ENCODE measurements at regions of chr7 and their contacts with region 1.

Region 1: DNA sequence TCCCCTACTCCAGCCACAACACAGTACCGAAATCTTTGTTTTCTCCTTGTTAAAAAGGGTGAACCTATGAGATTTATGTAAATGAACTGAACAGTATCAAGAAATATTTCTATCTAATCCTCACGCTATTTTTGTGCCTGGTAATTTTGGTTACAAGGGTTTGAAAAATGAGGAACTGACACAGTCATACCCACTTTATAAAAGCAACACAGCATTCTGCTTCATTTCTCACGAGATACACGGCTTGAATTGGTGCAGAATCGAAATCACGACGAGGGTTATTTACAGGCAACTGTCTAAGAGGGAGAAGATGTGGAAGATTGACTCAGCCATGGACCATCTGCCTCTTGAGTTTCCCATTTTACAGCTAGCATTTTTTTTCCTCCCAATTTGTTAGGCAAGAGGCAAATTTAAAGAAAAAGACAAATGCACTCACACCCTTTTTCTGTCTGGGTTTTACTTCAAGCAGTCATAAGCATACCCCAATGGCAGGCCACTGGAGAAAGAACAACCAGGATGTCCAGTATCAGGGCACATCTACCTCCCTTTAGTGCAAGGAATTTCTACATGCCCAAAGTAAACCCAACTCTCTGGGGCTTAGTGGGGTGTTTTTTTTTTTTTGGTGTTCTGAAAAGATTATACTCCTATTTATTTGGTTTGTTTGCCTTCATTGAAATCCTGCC is 108.1 kb downstream of the ITGB8 start:
- DNase-seq: no peak
- ATAC-seq: no peak

Region 2: DNA sequence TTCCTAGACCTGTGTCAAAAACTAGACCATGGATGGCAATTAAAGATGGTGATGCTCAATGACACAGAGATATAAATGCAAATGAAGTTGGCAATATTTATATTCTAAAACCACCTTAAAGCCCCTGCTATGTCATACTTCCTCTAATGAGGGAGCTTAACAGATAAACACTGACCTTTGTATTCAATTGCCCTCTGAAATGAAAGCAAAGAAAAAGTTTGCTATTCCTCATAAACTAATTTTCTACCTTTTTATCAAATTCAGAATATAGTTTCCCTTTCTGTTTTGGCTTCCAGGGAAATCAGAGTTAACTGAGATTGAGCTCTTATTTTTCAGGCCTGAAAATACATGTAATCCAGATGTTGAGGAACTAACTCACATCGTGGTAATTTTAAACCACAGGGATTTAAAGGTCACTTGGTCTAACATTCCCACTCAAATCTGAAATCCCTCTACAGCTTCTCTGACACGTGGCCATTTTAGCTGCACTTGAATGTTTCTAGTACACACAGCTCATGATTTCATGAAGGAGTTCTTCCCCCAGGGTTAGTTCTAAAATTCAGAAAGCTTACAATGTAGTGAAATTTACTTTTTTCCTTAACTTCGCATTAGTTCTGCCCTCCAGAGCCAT is 138.7 kb after region 1 on chr7:
- intact Hi-C with region 1: loop called (anchors 10 kb)
- DNase-seq: no peak
- ATAC-seq: no peak

Region 3: GRCh38 chr7:20730611-20731010 is 291.8 kb after region 1 on chr7:
- intact Hi-C with region 1: no loop called
- DNase-seq: no peak
- ATAC-seq: no peak

Region 4: GRCh38 chr7:20870977-20871376 is 432.1 kb after region 1 on chr7:
- intact Hi-C with region 1: no loop called
- DNase-seq: no peak
- ATAC-seq: no peak

Measured in Right ventricle myocardium inferior (tissue), 1 donor.